Common myeloid progenitor, CD34-positive (primary cell): ENCODE measurements at regions of chr11 and their contacts with region 1.

Region 1: GRCh38 chr11:36746886-36747710 is 149.1 kb upstream of the RAG2 start:
- DNase-seq: peak; percentile 93 to 97 (median 94)
- H3K4me3 ChIP-seq: no peak overlapping the region
- H3K27ac ChIP-seq: no peak overlapping the region
- H3K4me1 ChIP-seq: peaks cover 0 to 9% (median 5%) of the 10 kb centered on the region in 4 experiments
- H3K27me3 ChIP-seq: peaks cover 0 to 3% (median 0%) of the 10 kb centered on the region in 5 experiments

Region 2: GRCh38 chr11:36265793-36266628 is 481.1 kb before region 1 on chr11:
- CTCF ChIA-PET with region 1: no interaction called
- POLR2A ChIA-PET with region 1: no interaction called
- DNase-seq: peak; percentile 37 to 65 (median 45)
- H3K4me3 ChIP-seq: no peak overlapping the region
- H3K27ac ChIP-seq: no peak overlapping the region
- H3K4me1 ChIP-seq: peaks cover 0 to 2% (median 0%) of the 10 kb centered on the region in 4 experiments
- H3K27me3 ChIP-seq: peaks cover 0 to 25% (median 9%) of the 10 kb centered on the region in 5 experiments

Region 3: DNA sequence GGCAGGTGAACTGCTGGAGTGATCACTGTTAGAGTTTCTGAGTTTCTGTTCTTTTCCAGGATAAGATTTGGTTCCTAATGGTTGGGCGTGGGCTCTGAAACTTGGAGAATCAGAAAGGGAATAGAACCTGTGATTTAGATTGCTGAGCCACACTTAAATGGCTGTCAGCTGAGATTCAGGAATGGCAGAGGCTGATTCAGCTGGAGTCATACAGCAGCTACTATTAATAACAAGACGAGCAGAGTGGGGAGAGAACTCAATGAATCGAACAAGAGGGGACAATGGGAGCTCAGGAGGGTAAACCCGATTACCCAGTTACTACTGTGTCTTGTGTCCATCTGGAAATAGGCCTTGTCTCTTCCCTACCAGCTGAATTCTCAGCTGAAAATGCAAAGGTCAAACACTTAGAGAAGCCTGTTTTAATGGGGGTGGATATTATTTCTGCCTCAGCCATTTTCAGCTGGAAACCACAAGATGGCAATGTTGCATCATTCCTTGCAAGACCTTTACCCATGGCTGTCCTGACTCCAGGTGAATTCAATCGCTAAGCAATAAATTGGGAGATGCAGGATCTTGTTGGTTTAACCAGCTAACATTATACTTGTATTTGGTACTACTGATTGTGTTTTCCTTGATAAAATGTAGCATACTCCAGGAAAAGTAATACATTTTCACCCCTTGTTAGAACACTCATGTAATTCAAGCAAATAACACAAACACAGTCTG is 44.6 kb before region 1 on chr11:
- CTCF ChIA-PET with region 1: interaction called, 148 read pairs
- POLR2A ChIA-PET with region 1: interaction called, 4 read pairs
- DNase-seq: peak; percentile 72 to 74 (median 72)
- H3K4me3 ChIP-seq: no peak overlapping the region
- H3K27ac ChIP-seq: no peak overlapping the region
- H3K4me1 ChIP-seq: peaks cover 0 to 8% (median 0%) of the 10 kb centered on the region in 4 experiments
- H3K27me3 ChIP-seq: no peaks in the 10 kb centered on the region

Region 4: GRCh38 chr11:36711106-36711825 is 35.8 kb before region 1 on chr11:
- CTCF ChIA-PET with region 1: interaction called, 19 read pairs
- POLR2A ChIA-PET with region 1: no interaction called
- DNase-seq: no peak
- H3K4me3 ChIP-seq: no peak overlapping the region
- H3K27ac ChIP-seq: no peak overlapping the region
- H3K4me1 ChIP-seq: peaks cover 1 to 25% (median 4%) of the 10 kb centered on the region in 4 experiments
- H3K27me3 ChIP-seq: no peaks in the 10 kb centered on the region

Region 5: DNA sequence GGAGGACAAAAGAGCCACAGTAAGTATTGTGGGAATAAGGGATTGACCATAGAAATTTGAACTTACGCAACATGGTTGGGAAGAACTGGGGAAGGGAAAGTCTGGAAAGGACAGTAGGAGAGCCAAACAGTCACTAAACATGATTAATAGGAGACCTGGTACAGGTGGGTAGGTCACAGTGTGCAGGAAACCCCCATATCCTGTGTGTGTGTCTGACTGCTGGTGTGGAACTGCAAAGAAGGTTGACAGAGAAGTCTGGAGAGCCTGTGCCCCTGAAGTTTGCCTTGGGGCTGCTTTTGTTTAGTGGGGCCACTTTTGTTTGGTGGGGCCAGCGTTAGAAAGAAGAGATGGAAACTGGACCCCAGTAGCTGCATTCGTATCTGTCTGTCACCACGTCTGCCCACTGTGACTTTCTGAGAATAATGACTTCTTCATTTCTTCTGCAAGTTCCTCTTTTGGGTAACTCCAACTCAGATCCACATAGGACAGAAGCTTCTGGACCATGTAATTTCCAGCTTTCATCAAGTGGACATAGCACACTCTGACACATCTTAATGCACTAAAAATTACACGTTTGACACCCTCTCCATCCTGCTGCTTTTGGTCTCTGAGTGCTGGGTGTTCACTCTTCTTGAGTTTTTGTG is 22.2 kb before region 1 on chr11:
- CTCF ChIA-PET with region 1: interaction called, 18 read pairs
- POLR2A ChIA-PET with region 1: no interaction called
- DNase-seq: peak in 2 of 3 donors; percentile 63 to 64
- H3K4me3 ChIP-seq: no peak overlapping the region
- H3K27ac ChIP-seq: no peak overlapping the region
- H3K4me1 ChIP-seq: peaks cover 2 to 28% (median 7%) of the 10 kb centered on the region in 4 experiments
- H3K27me3 ChIP-seq: peaks cover 0 to 3% (median 0%) of the 10 kb centered on the region in 5 experiments